Heart left ventricle (tissue), 16 donors: ENCODE measurements at regions of chr1 and their contacts with region 1.

Region 1: GRCh38 chr1:211551628-211552460 is 27.1 kb downstream of the SLC30A1 start:
- DNase-seq: no peak
- ATAC-seq: no peak
- H3K4me3 ChIP-seq: no peak overlapping the region
- H3K27ac ChIP-seq: no peak overlapping the region
- H3K4me1 ChIP-seq: peaks cover 0 to 14% (median 5%) of the 10 kb centered on the region in 12 donors
- H3K27me3 ChIP-seq: no peaks in the 10 kb centered on the region
- CTCF ChIP-seq: no peak
- POLR2A ChIP-seq: no peak

Region 2: DNA sequence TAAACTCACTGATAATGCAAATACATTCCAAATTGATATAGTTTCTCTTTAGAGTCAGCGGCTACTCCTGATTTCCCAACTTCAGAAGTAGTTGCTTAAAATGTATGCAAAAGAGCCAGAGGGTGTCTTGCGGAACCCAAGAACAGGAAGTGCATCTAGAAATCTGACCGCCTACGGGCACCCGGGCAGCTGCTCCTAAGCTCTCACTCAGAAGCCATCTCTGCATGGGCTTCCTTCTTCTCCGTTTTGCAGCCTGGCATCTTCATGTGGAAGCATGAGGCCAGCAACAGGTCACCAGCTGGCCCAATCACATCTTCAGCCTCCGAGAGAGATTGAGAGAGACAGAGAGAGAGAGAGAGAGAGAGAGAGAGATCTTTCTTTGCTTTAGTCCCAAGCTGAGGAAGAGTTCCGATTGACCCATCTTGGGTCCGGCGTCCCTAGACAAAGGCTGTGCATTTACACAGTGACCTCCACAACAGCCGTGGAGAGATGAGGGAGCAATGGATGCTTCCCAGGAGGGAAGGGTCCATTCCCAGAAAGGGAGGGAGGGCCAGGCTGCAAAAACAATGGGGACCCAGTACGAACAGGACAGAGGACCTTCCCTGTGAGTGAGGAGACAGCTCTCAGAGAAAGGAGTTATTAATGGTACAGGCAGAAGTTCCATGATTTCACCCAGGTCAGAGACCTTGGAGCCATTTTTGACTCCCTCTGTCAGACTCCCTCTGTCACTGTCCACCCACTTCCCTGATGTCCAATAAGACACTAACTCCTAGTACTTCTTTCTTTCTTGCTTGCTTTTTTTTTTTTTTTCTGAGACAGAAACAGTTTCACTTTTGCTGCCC is 55.3 kb after region 1 on chr1:
- intact Hi-C with region 1: no loop called
- DNase-seq: peak in 3 of 5 donors; percentile 33 to 55 (median 41)
- ATAC-seq: peak in 3 of 4 donors; percentile 49 to 72 (median 61)
- H3K4me3 ChIP-seq: peak overlapping the region in 7 of 12 donors; percentile 13 to 55 (median 21)
- H3K27ac ChIP-seq: peak overlapping the region in 6 of 12 donors; percentile 4 to 93 (median 34)
- H3K4me1 ChIP-seq: peaks cover 0 to 67% (median 4%) of the 10 kb centered on the region in 12 donors
- H3K27me3 ChIP-seq: no peaks in the 10 kb centered on the region
- CTCF ChIP-seq: no peak
- POLR2A ChIP-seq: no peak

Region 3: DNA sequence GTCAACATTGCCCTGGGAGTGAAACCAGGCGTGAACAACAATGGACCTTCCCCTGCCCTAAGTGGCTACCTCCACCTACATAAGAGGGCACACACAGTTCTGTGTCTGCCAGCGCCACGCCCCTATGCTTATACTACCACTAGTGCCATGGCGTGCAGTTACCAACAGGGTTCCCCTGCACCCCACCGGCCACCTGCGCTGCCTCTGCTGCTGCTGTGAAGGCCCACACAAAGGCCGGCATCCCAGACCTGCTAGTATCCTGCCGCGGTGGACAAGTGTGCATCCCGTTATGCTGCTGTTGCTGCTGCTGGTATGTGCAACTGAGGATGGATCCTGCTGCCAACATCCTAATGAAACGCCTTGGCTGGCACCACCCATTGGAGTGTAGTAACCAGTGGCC is 407.8 kb after region 1 on chr1:
- intact Hi-C with region 1: loop called in 1 of 10 experiments (anchors 5 kb)
- DNase-seq: no peak
- ATAC-seq: no peak
- H3K4me3 ChIP-seq: no peak overlapping the region
- H3K27ac ChIP-seq: no peak overlapping the region
- H3K4me1 ChIP-seq: no peaks in the 10 kb centered on the region
- H3K27me3 ChIP-seq: no peaks in the 10 kb centered on the region
- CTCF ChIP-seq: no peak
- POLR2A ChIP-seq: no peak